PC-9 (cell line): ENCODE measurements at regions of chr15 and their contacts with region 1.

Region 1: DNA sequence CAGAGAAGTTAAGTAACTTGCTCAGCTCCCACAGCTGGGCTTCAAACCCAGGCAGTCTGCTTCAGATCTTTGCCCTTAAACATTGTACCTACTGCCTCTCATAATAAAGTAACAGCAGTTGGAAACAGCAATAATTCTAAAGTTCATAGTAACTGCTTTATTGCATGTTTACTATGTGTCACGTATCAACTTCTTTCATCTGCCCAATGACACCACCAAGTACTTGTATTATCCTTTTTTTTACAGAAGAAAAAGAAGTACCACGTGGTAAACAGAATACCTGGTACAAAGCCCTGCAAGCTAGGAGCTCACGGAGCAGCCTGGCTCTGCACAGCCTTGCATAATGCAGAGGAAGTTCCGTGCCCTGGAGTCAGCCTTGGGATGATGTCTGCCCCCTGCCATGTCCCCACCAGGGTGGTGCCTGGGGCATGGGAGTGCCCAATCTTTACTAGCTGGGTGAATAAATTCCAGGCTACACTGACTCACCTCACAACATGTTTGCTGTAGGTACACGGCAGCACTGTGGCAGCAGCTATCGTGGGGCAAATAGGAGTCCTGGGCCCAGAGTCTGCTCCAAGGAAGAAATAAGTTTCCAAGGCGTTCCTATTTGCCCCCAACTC is 77.2 kb downstream of the LDHAL6B start:
- DNase-seq: peak; percentile 97 to 98
- H3K4me3 ChIP-seq: peak overlapping the region; percentile 21; the same call in 1 of the 2 replicates
- H3K27ac ChIP-seq: peak overlapping the region; percentile 97
- H3K4me1 ChIP-seq: peaks cover 76% of the 10 kb centered on the region
- H3K27me3 ChIP-seq: no peaks in the 10 kb centered on the region
- CTCF ChIP-seq: no peak

Region 2: GRCh38 chr15:59255647-59256380 is 28.0 kb before region 1 on chr15:
- CTCF ChIA-PET with region 1: interaction called, 9 read pairs
- POLR2A ChIA-PET with region 1: interaction called, 5 read pairs
- intact Hi-C with region 1: loop called (anchors 1 kb)
- DNase-seq: peak; percentile 46 to 93
- H3K4me3 ChIP-seq: no peak overlapping the region
- H3K27ac ChIP-seq: peak overlapping the region; percentile 90
- H3K4me1 ChIP-seq: peaks cover 65% of the 10 kb centered on the region
- H3K27me3 ChIP-seq: no peaks in the 10 kb centered on the region
- CTCF ChIP-seq: no peak

Region 3: GRCh38 chr15:59294568-59295260 is 10.9 kb after region 1 on chr15:
- CTCF ChIA-PET with region 1: interaction called, 3 read pairs
- POLR2A ChIA-PET with region 1: interaction called, 16 read pairs
- intact Hi-C with region 1: loop called (anchors 1 kb)
- DNase-seq: peak; percentile 49 to 93
- H3K4me3 ChIP-seq: peak overlapping the region; percentile 25; the same call in 1 of the 2 replicates
- H3K27ac ChIP-seq: peak overlapping the region; percentile 97
- H3K4me1 ChIP-seq: peaks cover 98% of the 10 kb centered on the region
- H3K27me3 ChIP-seq: no peaks in the 10 kb centered on the region
- CTCF ChIP-seq: no peak

Region 4: GRCh38 chr15:59313641-59314332 is 30.0 kb after region 1 on chr15:
- CTCF ChIA-PET with region 1: no interaction called
- POLR2A ChIA-PET with region 1: interaction called, 11 read pairs
- intact Hi-C with region 1: no loop called
- DNase-seq: peak; percentile 73
- H3K4me3 ChIP-seq: no peak overlapping the region
- H3K27ac ChIP-seq: peak overlapping the region; percentile 49
- H3K4me1 ChIP-seq: peaks cover 28% of the 10 kb centered on the region
- H3K27me3 ChIP-seq: no peaks in the 10 kb centered on the region
- CTCF ChIP-seq: no peak

Region 5: DNA sequence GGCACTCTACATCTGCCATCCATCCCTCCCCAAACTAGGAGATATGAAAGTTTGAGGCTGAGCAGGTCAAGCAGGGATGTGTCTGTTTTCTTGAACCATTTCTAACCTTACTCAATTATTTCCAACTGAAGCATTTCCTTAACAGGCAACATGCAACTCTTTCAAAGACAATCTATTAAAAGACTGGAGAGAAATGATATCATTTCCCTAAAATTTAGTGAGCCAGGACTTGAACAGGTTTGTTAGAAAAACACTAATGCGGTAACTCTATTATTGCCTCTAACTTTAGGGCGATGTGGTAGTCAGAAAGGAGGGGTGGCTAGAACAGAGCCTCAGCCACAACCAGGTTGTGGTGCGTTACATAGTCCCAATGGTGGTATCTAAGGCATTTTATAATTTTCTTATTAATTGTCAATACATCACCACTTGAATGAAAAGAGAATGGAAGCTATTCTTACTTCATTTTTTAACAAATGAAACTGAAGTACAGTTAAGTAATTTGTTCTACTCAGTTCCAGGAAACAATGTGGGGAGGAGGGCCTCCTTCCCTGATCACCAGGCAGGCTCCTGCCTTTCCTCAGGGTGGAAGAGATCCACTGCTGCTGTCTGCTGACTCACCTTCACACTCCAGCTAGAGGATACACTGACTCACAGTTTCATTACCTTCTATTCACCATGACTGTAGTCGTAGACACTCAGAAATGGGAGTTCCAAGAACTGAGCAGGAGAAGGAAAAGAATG is 66.0 kb after region 1 on chr15:
- CTCF ChIA-PET with region 1: no interaction called
- POLR2A ChIA-PET with region 1: no interaction called
- intact Hi-C with region 1: loop called (anchors 1 kb)
- DNase-seq: peak; percentile 68 to 91
- H3K4me3 ChIP-seq: 0 out of 2 replicates have a peak overlapping the region, but pooled peaks have one; percentile 35
- H3K27ac ChIP-seq: peak overlapping the region; percentile 95
- H3K4me1 ChIP-seq: peaks cover 20% of the 10 kb centered on the region
- H3K27me3 ChIP-seq: no peaks in the 10 kb centered on the region
- CTCF ChIP-seq: no peak

Region 6: GRCh38 chr15:59372352-59373211 is 88.8 kb after region 1 on chr15 and contains the start of gene MYO1E:
- CTCF ChIA-PET with region 1: no interaction called
- POLR2A ChIA-PET with region 1: interaction called, 24 read pairs
- intact Hi-C with region 1: loop called (anchors 2 kb)
- DNase-seq: peak; percentile 91
- H3K4me3 ChIP-seq: peak within 1 kb of the TSS; percentile 97
- H3K27ac ChIP-seq: peak within 1 kb of the TSS; percentile 89
- H3K4me1 ChIP-seq: peaks cover 30% of the 10 kb centered on the region
- H3K27me3 ChIP-seq: no peaks in the 10 kb centered on the region
- CTCF ChIP-seq: no peak
- total RNA-seq, gene MYO1E: 156 and 213 TPM in 2 replicates